Activated naive CD4-positive, alpha-beta T cell treated with anti-CD3 and anti-CD28 coated beads for 36 hours (primary cell): ENCODE measurements at regions of chr6 and their contacts with region 1.

Region 1: DNA sequence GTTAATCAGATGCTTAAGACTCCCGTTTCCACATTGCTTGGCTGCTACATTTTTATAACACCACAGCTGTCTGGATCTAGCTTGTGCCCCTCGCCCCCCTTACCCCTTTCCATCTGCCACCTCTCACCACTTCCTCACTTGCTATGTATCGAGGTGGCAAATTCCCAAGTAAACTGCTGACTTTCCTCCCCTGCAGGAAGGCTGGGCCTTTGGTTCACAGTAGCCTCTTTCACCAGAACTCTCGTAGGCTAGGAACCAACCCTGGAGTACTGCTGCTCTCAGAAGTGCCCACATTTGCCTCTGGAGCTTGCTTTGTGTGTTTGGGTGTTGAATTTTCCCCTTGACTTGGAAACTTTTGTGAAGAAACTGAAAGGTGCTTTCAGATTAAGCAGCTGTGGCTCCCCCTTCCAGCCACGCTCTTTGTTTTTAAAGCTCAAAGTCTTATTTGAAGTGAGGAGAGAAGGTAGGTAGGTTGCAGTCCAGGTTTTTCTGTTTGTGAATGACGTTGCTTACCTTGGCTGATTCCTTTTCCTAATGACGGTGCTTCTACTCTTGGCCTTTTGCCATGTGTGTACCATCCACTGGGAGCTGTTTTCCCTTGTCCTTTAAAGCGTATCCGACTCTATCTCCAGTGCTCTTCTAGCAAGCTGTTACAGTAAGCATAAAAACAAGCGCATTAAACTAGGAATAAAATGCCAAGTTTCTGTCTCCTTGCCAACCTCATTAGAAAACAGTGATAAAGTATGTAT is 90.4 kb downstream of the CARMIL1 start:
- DNase-seq: peak; percentile 57
- H3K4me3 Mint-ChIP-seq: peak overlapping the region; percentile 51
- H3K27ac Mint-ChIP-seq: peak overlapping the region; percentile 74
- H3K4me1 Mint-ChIP-seq: peaks cover 75% of the 10 kb centered on the region
- H3K27me3 Mint-ChIP-seq: no peaks in the 10 kb centered on the region

Region 2: GRCh38 chr6:25389471-25389870 is 19.9 kb after region 1 on chr6:
- CTCF ChIA-PET with region 1: interaction called, 3 read pairs
- intact Hi-C with region 1: loop called (anchors 2 kb)
- DNase-seq: no peak
- H3K4me3 Mint-ChIP-seq: no peak overlapping the region
- H3K27ac Mint-ChIP-seq: no peak overlapping the region
- H3K4me1 Mint-ChIP-seq: peaks cover 27% of the 10 kb centered on the region
- H3K27me3 Mint-ChIP-seq: no peaks in the 10 kb centered on the region